ENCODE measurements at regions of chr10 and their contacts with region 1.

Region 1: GRCh38 chr10:47181052-47181849 is 118.7 kb upstream of the GDF10 start:
- DNase-seq: no peak
- H3K4me3 ChIP-seq: no peak overlapping the region
- H3K4me3 Mint-ChIP-seq: no peak overlapping the region
- H3K27ac ChIP-seq: no peak overlapping the region
- H3K27ac Mint-ChIP-seq: no peak overlapping the region
- H3K4me1 ChIP-seq: no peaks in the 10 kb centered on the region
- H3K4me1 Mint-ChIP-seq: peaks cover 5% of the 10 kb centered on the region
- H3K27me3 ChIP-seq: no peaks in the 10 kb centered on the region
- H3K27me3 Mint-ChIP-seq: peaks cover 0 to 3% (median 1%) of the 10 kb centered on the region in 3 donors
- CTCF ChIP-seq: no peak

Region 2: GRCh38 chr10:47137311-47137851 is 43.9 kb before region 1 on chr10:
- intact Hi-C with region 1: loop called in 1 of 2 experiments (anchors 10 kb)
- DNase-seq: peak in 1 of 3 donors; percentile 23
- H3K4me3 ChIP-seq: no peak overlapping the region
- H3K4me3 Mint-ChIP-seq: no peak overlapping the region
- H3K27ac ChIP-seq: no peak overlapping the region
- H3K27ac Mint-ChIP-seq: no peak overlapping the region
- H3K4me1 ChIP-seq: peaks cover 27 to 29% of the 10 kb centered on the region in 2 donors
- H3K4me1 Mint-ChIP-seq: peaks cover 28% of the 10 kb centered on the region
- H3K27me3 ChIP-seq: no peaks in the 10 kb centered on the region
- H3K27me3 Mint-ChIP-seq: peaks cover 0 to 7% (median 1%) of the 10 kb centered on the region in 3 donors
- CTCF ChIP-seq: no peak

Region 3: GRCh38 chr10:47243791-47244190 is 62.5 kb after region 1 on chr10:
- intact Hi-C with region 1: no loop called
- DNase-seq: no peak
- H3K4me3 ChIP-seq: no peak overlapping the region
- H3K4me3 Mint-ChIP-seq: no peak overlapping the region
- H3K27ac ChIP-seq: no peak overlapping the region
- H3K27ac Mint-ChIP-seq: no peak overlapping the region
- H3K4me1 ChIP-seq: peaks cover 4 to 8% of the 10 kb centered on the region in 2 donors
- H3K4me1 Mint-ChIP-seq: peaks cover 14% of the 10 kb centered on the region
- H3K27me3 ChIP-seq: no peaks in the 10 kb centered on the region
- H3K27me3 Mint-ChIP-seq: peaks cover 2 to 5% (median 2%) of the 10 kb centered on the region in 3 donors
- CTCF ChIP-seq: no peak

Region 4: GRCh38 chr10:47300429-47300931 is 119.2 kb after region 1 on chr10:
- intact Hi-C with region 1: no loop called
- DNase-seq: no peak
- H3K4me3 ChIP-seq: peak overlapping the region in 1 of 3 experiments; percentile 40
- H3K4me3 Mint-ChIP-seq: peak overlapping the region; percentile 48 to 83
- H3K27ac ChIP-seq: no peak overlapping the region
- H3K27ac Mint-ChIP-seq: no peak overlapping the region
- H3K4me1 ChIP-seq: peaks cover 8 to 21% of the 10 kb centered on the region in 2 donors
- H3K4me1 Mint-ChIP-seq: peaks cover 23% of the 10 kb centered on the region
- H3K27me3 ChIP-seq: peaks cover 44 to 63% of the 10 kb centered on the region in 2 donors
- H3K27me3 Mint-ChIP-seq: peaks cover 51 to 66% (median 59%) of the 10 kb centered on the region in 3 donors
- CTCF ChIP-seq: no peak